Activated naive CD4-positive, alpha-beta T cell treated with anti-CD3 and anti-CD28 coated beads, Interleukin-2, amount 10 ng/mL, durations not matched to agents 7 days and 5 days (primary cell): ENCODE measurements at regions of chr1 and their contacts with region 1.

Region 1: DNA sequence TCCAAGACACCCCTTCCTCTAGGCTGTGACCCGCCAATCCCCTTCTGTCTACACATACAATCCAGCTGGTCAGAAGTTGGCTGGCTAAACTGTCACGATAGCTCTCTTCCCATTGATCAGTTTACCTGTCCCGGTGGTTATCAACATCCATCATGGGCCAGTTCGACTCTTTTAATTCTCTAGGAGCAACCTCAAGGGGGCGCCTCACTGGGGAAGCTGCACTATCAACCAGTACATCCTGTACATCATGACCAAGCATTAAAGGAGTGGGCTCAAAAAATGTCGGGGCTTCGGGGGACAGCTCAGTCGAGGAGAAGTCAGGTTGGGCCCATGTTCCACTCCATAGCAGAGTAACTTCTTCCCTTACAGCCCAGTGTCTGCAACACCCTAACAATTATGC is 53.2 kb upstream of the B3GALNT2 start:
- DNase-seq: peak; percentile 45
- H3K4me3 Mint-ChIP-seq: no peak overlapping the region
- H3K27ac Mint-ChIP-seq: no peak overlapping the region
- H3K4me1 Mint-ChIP-seq: no peaks in the 10 kb centered on the region
- H3K27me3 Mint-ChIP-seq: peaks cover 4% of the 10 kb centered on the region

Region 2: GRCh38 chr1:235601104-235601503 is 43.6 kb after region 1 on chr1:
- CTCF ChIA-PET with region 1: interaction called, 15 read pairs
- DNase-seq: peak; percentile 46
- H3K4me3 Mint-ChIP-seq: no peak overlapping the region
- H3K27ac Mint-ChIP-seq: no peak overlapping the region
- H3K4me1 Mint-ChIP-seq: no peaks in the 10 kb centered on the region
- H3K27me3 Mint-ChIP-seq: peaks cover 12% of the 10 kb centered on the region

Region 3: DNA sequence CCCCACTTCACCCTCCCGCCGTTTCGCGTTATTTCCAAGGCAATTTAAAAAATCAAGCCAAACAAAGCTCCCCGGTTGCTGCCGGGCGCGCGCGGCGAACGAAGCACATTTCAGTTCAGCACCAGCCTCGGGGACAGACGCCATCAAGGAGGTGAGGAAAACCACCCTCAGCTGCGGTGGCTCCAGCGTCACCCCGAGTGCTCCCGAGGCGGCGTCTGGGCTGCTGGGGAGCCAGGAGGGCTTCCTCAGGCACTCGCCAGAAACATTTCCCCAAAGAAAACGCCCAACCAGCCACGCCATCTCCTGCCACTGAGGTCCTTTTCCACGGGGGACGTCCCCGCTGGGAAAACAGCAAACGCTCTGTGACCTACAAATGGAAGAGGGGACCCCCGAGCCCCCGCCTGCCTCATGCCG is 91.5 kb after region 1 on chr1:
- CTCF ChIA-PET with region 1: no interaction called
- DNase-seq: peak; percentile 81
- H3K4me3 Mint-ChIP-seq: peak overlapping the region; percentile 81
- H3K27ac Mint-ChIP-seq: no peak overlapping the region
- H3K4me1 Mint-ChIP-seq: peaks cover 31% of the 10 kb centered on the region
- H3K27me3 Mint-ChIP-seq: peaks cover 91% of the 10 kb centered on the region